ENCODE measurements at regions of chr7 and their contacts with region 1.

Region 1: DNA sequence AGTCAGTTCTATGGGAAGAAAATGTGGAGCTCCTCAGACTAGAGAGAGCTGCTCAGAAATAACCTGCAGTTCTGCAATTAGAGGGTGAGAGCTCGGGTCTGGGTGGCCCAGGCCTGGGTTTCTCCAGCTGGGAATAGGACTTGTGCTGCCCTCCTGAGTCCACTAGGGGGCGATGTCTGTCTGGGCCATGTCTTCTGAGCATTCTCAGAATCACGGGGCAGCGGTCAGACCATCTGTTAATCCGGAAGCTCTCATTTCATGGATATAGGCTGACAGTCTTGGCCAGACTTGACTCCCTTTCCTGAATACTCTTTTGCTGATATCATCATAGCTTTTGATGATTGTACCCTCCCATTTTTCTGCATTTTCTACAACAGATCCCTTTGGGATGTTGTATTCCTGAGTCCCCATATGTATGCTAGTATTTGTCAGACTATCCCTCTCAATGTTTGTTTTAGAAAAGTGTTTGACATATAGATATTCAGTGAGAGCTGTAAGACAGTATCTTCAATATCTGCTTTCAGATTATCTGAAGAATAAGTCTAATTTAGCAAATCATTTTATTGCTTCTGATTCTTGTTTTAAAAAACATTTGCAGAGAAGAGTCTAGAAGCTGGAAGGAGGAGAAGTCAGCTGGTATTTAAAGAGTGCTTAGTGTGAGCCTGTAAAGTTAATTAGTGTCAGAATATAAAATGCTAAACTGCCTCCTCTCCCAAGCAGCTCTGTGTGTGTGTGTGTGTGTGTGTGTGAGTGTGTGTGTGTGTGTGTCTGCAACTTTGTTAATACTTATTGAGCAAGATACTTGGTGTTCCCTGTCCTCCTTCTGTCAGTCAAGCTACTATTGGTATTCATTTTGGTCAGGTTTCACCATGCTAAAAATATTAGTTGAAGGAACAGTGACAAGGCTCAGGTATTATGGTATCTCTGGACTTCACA is 38.0 kb downstream of the STARD3NL start:
- DNase-seq: peak; percentile 93
- ATAC-seq: peak; percentile 97
- H3K4me3 ChIP-seq: no peak overlapping the region
- H3K27ac ChIP-seq: no peak overlapping the region
- H3K4me1 ChIP-seq: peaks cover 3% of the 10 kb centered on the region; the same call in 1 of the 2 replicates
- H3K27me3 ChIP-seq: no peaks in the 10 kb centered on the region
- CTCF ChIP-seq: peak; percentile 96
- POLR2A ChIP-seq: no peak
- RAD21 ChIP-seq: peak; percentile 82

Region 2: DNA sequence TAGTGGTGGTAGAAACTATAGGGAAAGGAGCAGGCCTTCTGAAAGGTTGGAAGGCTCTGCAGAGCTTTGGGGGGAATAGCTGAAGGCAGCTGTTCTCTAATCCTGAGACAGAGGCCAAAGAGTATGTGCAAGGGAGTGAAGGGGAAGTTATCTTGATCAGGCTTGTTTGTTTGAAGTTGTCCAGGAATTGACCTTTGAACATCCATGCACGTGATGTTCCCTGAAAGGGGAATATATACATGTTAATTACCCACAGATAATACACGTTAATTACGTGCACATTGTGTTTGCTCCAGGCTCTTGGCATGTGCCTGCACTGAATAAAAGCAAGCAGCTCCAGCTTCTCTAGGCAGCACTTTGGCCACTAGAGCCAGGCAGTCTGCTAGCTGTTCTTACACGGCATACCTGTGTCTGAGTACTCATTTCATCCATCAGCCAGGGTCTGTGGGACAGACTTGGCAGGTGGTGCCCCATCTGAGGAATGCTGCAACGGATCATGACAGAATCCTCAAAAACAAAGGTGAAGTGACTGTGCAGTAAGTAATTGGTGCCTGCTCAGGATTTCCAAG is 55.9 kb before region 1 on chr7:
- CTCF ChIA-PET with region 1: no interaction called
- POLR2A ChIA-PET with region 1: no interaction called
- dilution Hi-C with region 1: no loop called
- in situ Hi-C with region 1: no loop called
- intact Hi-C with region 1: no loop called
- DNase-seq: no peak
- ATAC-seq: no peak
- H3K4me3 ChIP-seq: no peak overlapping the region
- H3K27ac ChIP-seq: no peak overlapping the region
- H3K4me1 ChIP-seq: no peaks in the 10 kb centered on the region
- H3K27me3 ChIP-seq: no peaks in the 10 kb centered on the region
- CTCF ChIP-seq: no peak
- POLR2A ChIP-seq: no peak
- RAD21 ChIP-seq: no peak

Region 3: DNA sequence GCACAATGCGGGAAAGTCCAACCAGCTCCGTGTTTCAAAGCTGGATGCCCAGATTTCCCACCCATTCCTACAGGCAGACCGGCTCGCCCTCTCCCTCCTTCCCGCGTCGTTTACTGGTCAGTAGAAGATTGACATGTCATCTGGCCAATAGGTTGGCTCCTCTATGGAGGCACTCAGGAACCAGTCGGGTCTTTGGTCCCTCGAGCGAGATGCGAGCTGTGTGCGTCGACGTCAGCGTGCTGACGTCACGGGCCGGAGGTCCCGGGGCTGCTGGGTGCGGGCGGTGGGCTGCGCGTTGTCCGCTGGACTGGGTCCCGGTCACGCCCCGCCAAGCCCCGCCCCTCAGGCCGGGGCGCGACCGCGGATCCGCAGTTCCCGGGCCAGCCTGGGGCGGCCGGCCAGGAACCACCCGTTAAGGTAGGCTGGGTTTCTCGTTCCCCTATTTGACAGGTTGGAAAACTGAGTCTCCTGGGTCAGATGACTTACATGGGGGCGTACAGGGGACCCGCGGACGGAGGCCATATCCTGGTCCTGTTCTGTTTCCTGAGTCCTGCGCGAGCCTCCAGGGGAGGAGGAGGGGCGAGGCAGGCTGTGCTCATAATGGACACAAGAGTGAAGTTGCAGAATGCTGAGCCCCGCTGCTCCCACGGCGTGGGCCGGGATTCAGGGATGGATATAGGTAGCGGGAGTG is 37.9 kb before region 1 on chr7 and contains the start of gene STARD3NL:
- CTCF ChIA-PET with region 1: interaction called, 17 read pairs
- POLR2A ChIA-PET with region 1: no interaction called
- dilution Hi-C with region 1: no loop called
- in situ Hi-C with region 1: no loop called
- intact Hi-C with region 1: loop called (anchors 2 kb)
- DNase-seq: peak; percentile 100
- ATAC-seq: peak; percentile 98
- H3K4me3 ChIP-seq: peak within 1 kb of the TSS; percentile 65
- H3K27ac ChIP-seq: peak within 1 kb of the TSS; percentile 83
- H3K4me1 ChIP-seq: peaks cover 6% of the 10 kb centered on the region
- H3K27me3 ChIP-seq: no peaks in the 10 kb centered on the region
- CTCF ChIP-seq: no peak
- POLR2A ChIP-seq: peak; percentile 77
- RAD21 ChIP-seq: no peak
- total RNA-seq, gene STARD3NL: 69.7 and 102 TPM in 2 replicates

Region 4: GRCh38 chr7:38198366-38198765 is 17.6 kb before region 1 on chr7:
- CTCF ChIA-PET with region 1: interaction called, 25 read pairs
- POLR2A ChIA-PET with region 1: no interaction called
- dilution Hi-C with region 1: no loop called
- in situ Hi-C with region 1: no loop called
- intact Hi-C with region 1: no loop called
- DNase-seq: peak; percentile 47
- ATAC-seq: peak; percentile 63
- H3K4me3 ChIP-seq: no peak overlapping the region
- H3K27ac ChIP-seq: peak overlapping the region; percentile 48; the same call in 1 of the 2 replicates
- H3K4me1 ChIP-seq: peaks cover 27% of the 10 kb centered on the region
- H3K27me3 ChIP-seq: no peaks in the 10 kb centered on the region
- CTCF ChIP-seq: no peak
- POLR2A ChIP-seq: no peak
- RAD21 ChIP-seq: no peak

Region 5: DNA sequence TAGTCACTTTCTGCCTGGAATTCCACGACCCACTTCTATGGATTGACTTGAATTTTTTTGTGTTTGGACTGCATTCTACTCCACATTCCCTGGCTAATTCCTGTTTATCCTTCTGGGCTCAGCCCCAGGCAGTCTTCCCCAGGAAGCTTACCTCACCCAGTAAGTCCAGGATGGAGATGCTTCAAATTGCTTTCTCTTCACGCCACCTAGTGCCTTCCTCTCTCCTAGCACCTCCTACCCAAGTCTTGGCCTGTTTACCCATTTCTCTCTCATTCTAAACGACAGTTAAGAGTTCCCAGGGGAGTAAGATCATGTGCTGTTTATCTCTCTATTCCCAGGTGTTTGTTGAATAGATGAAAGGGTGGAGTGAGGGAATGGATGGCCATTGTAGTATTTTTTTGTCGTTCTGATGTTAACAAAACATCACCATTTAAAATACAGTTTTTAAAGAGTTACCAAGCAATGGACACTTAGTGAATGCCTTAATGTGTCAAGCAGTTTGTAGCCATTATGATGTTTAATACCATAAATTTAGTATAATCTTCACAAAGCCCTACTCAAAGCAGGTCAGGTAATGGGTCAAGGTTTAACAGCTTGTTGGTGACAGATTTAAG is 102.9 kb after region 1 on chr7:
- CTCF ChIA-PET with region 1: interaction called, 30 read pairs
- POLR2A ChIA-PET with region 1: no interaction called
- dilution Hi-C with region 1: no loop called
- in situ Hi-C with region 1: no loop called
- intact Hi-C with region 1: no loop called
- DNase-seq: peak; percentile 81
- ATAC-seq: peak; percentile 84
- H3K4me3 ChIP-seq: no peak overlapping the region
- H3K27ac ChIP-seq: no peak overlapping the region
- H3K4me1 ChIP-seq: peaks cover 7% of the 10 kb centered on the region; the same call in 1 of the 2 replicates
- H3K27me3 ChIP-seq: peaks cover under 1% of the 10 kb centered on the region; the same call in 1 of the 2 replicates
- CTCF ChIP-seq: peak; percentile 70
- POLR2A ChIP-seq: no peak
- RAD21 ChIP-seq: peak; percentile 77

Region 6: DNA sequence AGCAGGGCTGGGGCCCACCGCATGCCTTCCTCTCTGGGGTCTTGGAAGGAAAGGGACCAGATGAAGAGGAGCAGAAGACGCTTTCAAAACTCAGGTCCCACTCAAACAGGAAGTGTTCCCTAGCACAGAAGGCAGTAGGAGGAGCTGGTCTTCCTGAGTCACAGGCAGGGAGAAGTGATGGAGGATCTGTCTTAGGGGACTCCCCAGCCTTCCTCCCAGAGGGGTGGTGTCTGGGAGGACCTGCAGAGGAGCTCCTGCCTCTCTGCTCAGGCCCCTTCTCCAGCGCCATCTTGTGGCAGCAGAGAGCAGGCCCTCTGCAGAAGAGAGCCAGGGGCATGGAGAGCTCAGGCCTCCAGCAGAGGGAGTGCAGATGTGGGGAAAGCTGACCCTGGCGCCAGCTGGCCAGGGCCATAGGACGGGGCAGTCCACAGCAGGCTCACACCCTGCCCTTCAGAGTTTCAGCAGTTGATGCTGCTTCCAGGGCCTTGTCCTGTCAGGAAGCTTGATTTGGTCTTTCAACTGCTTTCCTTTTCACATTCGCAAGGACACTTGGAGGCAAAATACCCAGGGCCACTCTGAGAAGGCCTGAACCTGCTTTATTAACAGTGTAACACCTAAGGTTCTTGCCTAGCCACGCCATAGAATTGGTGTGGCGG is 119.6 kb after region 1 on chr7:
- CTCF ChIA-PET with region 1: interaction called, 35 read pairs
- POLR2A ChIA-PET with region 1: no interaction called
- dilution Hi-C with region 1: no loop called
- in situ Hi-C with region 1: no loop called
- intact Hi-C with region 1: loop called (anchors 5 kb)
- DNase-seq: peak; percentile 94
- ATAC-seq: peak; percentile 99
- H3K4me3 ChIP-seq: no peak overlapping the region
- H3K27ac ChIP-seq: no peak overlapping the region
- H3K4me1 ChIP-seq: peaks cover 2% of the 10 kb centered on the region; the same call in 1 of the 2 replicates
- H3K27me3 ChIP-seq: no peaks in the 10 kb centered on the region
- CTCF ChIP-seq: peak; percentile 99
- POLR2A ChIP-seq: no peak
- RAD21 ChIP-seq: peak; percentile 78

Measured in IMR-90 (cell line).